Endothelial cell of umbilical vein (primary cell): ENCODE measurements at regions of chr6 and their contacts with region 1.

Region 1: GRCh38 chr6:52389626-52390360 is 27.8 kb downstream of the PAQR8 start:
- DNase-seq: peak; percentile 73
- H3K4me3 ChIP-seq: no peak overlapping the region
- H3K27ac ChIP-seq: peak overlapping the region; percentile 37
- H3K4me1 ChIP-seq: peaks cover 20% of the 10 kb centered on the region
- H3K27me3 ChIP-seq: no peaks in the 10 kb centered on the region
- CTCF ChIP-seq: no peak
- POLR2A ChIP-seq: no peak

Region 2: GRCh38 chr6:52352239-52353008 is 37.4 kb before region 1 on chr6:
- CTCF ChIA-PET with region 1: interaction called, 12 read pairs
- POLR2A ChIA-PET with region 1: no interaction called
- dilution Hi-C with region 1: no loop called
- intact Hi-C with region 1: no loop called
- DNase-seq: peak; percentile 85
- H3K4me3 ChIP-seq: no peak overlapping the region
- H3K27ac ChIP-seq: peak overlapping the region; percentile 26
- H3K4me1 ChIP-seq: peaks cover 13% of the 10 kb centered on the region
- H3K27me3 ChIP-seq: peaks cover 1 to 2% of the 10 kb centered on the region in 2 experiments
- CTCF ChIP-seq: no peak
- POLR2A ChIP-seq: no peak

Region 3: DNA sequence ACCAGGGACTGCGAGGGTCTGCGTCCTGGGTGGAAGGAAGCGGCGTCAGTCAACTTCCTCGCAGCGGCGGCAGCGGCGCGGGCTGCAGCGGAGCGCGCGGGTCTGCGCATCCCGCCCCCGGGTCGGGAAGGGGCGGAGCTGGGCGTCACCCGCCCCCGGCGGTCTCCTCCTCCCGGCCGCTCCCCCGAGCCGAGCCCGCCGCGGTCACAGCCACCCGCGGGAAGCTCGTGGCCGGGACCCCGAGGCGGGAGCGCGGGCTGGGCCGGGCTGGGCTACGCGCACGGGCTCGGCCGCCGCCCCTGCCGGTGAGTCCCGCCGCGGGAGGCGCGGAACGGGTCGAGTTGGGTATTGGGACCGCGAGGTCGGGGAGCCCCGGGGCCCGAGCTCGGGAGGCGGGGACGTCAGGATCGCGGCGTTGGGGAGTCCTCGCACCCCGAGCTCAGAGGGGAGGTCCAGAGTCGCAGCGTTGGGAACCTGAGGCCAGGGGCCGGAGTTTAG is 27.8 kb before region 1 on chr6 and contains the start of gene PAQR8:
- CTCF ChIA-PET with region 1: interaction called, 17 read pairs
- POLR2A ChIA-PET with region 1: interaction called, 4 read pairs
- dilution Hi-C with region 1: no loop called
- intact Hi-C with region 1: no loop called
- DNase-seq: peak; percentile 66
- H3K4me3 ChIP-seq: peak within 1 kb of the TSS; percentile 78 to 97 (median 88)
- H3K27ac ChIP-seq: peak within 1 kb of the TSS; percentile 41
- H3K4me1 ChIP-seq: peaks cover 12% of the 10 kb centered on the region
- H3K27me3 ChIP-seq: no peaks in the 10 kb centered on the region
- CTCF ChIP-seq: no peak
- POLR2A ChIP-seq: peak; percentile 42
- total RNA-seq, gene PAQR8: 6.0 TPM in 2 replicates

Region 4: GRCh38 chr6:52598123-52598823 is 208.5 kb after region 1 on chr6:
- CTCF ChIA-PET with region 1: no interaction called
- POLR2A ChIA-PET with region 1: no interaction called
- dilution Hi-C with region 1: no loop called
- intact Hi-C with region 1: no loop called
- DNase-seq: peak; percentile 54
- H3K4me3 ChIP-seq: no peak overlapping the region
- H3K27ac ChIP-seq: no peak overlapping the region
- H3K4me1 ChIP-seq: peaks cover 34% of the 10 kb centered on the region
- H3K27me3 ChIP-seq: no peaks in the 10 kb centered on the region
- CTCF ChIP-seq: peak; percentile 63 to 75
- POLR2A ChIP-seq: no peak